ENCODE measurements at regions of chr16 and their contacts with region 1.

Region 1: DNA sequence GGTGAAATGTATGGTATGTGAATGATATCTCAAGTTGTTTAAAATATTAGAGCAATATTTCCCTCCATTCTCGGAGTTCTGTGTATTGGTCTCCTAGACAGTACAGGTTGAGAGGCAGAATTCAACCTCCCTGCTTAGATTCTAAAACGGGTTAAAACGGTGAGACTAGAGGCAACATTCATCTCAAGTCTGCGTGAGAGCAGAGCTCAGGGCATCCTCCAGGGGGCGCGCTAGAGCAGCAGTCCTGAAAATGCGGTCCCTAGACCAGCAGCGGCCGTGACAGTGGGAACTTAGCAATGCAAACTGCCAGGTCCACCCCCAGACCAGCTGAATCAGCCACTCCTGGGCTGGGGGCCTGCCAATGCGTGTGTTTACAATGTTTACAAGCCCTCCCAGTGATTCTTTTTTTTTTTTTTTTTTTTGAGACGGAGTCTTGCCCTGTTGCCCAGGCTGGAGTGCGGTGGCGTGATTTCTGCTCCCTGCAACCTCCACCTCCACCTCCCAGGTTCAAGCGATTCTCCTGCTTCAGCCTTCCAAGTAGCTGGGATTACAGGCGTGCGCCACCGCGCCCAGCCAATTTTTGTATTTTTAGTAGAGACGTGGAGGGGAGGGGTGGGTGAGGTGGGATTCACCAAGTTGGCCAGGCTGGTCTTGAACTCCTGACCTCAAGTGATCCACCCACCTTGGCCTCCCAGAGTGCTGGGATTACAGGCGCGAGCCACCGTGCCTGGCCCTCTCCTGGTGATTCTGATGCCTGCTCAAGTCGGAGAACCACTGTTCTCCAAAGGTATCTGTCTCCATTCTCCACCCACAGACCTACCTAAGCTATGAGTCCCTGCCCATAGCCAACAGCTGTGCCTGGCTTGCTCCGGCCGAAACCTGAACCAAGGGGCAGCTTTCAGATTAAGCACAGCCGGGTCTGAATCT is 24.2 kb downstream of the KLHL36 start:
- DNase-seq: peak; percentile 91
- ATAC-seq: peak; percentile 96
- H3K4me3 Mint-ChIP-seq: no peak overlapping the region
- H3K27ac Mint-ChIP-seq: no peak overlapping the region
- H3K4me1 Mint-ChIP-seq: peaks cover 7% of the 10 kb centered on the region
- H3K27me3 Mint-ChIP-seq: peaks cover 3% of the 10 kb centered on the region

Region 2: DNA sequence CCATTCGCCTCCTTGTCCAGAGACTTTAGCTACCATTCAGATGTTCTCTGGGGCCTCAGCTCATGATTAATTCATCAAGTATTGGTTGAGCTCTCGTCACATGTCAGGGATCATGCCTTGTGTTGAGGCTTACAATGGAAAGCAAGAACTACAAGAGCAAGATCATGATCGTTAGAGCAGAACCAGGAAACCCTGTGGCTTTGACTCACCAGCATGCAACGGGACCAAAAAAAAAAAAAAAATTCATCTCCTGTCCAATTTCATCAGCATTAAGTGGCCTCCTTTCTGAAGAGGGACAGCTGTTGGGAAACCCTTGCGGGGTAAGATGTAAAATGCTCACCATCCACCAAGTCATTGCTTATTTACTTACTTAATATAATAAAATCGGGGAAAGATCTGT is 15.2 kb after region 1 on chr16:
- CTCF ChIA-PET with region 1: interaction called, 13 read pairs
- POLR2A ChIA-PET with region 1: no interaction called
- intact Hi-C with region 1: no loop called
- DNase-seq: peak; percentile 14
- ATAC-seq: peak; percentile 89
- H3K4me3 Mint-ChIP-seq: no peak overlapping the region
- H3K27ac Mint-ChIP-seq: no peak overlapping the region
- H3K4me1 Mint-ChIP-seq: peaks cover 4% of the 10 kb centered on the region
- H3K27me3 Mint-ChIP-seq: peaks cover 5% of the 10 kb centered on the region

Measured in activated CD4-positive, alpha-beta T cell treated with anti-CD3 and anti-CD28 coated beads for 36 hours (primary cell).